Panc1 (cell line): ENCODE measurements at regions of chr3 and their contacts with region 1.

Region 1: GRCh38 chr3:65953301-65953812 is 85.4 kb downstream of the MAGI1 start:
- DNase-seq: no peak
- ATAC-seq: peak; percentile 58; the same call in 1 of the 2 replicates
- H3K4me3 ChIP-seq: no peak overlapping the region
- H3K27ac ChIP-seq: no peak overlapping the region
- H3K4me1 ChIP-seq: peaks cover 15% of the 10 kb centered on the region
- H3K27me3 ChIP-seq: no peaks in the 10 kb centered on the region
- CTCF ChIP-seq: no peak

Region 2: GRCh38 chr3:65742914-65743313 is 210.4 kb before region 1 on chr3:
- CTCF ChIA-PET with region 1: no interaction called
- POLR2A ChIA-PET with region 1: no interaction called
- in situ Hi-C with region 1: no loop called
- intact Hi-C with region 1: no loop called
- DNase-seq: no peak
- ATAC-seq: no peak
- H3K4me3 ChIP-seq: no peak overlapping the region
- H3K27ac ChIP-seq: no peak overlapping the region
- H3K4me1 ChIP-seq: no peaks in the 10 kb centered on the region
- H3K27me3 ChIP-seq: no peaks in the 10 kb centered on the region
- CTCF ChIP-seq: no peak

Region 3: GRCh38 chr3:65914740-65915367 is 38.5 kb before region 1 on chr3:
- CTCF ChIA-PET with region 1: no interaction called
- POLR2A ChIA-PET with region 1: no interaction called
- in situ Hi-C with region 1: no loop called
- intact Hi-C with region 1: no loop called
- DNase-seq: no peak
- ATAC-seq: no peak
- H3K4me3 ChIP-seq: no peak overlapping the region
- H3K27ac ChIP-seq: no peak overlapping the region
- H3K4me1 ChIP-seq: no peaks in the 10 kb centered on the region
- H3K27me3 ChIP-seq: no peaks in the 10 kb centered on the region
- CTCF ChIP-seq: no peak; the same call in 1 of the 2 replicates

Region 4: DNA sequence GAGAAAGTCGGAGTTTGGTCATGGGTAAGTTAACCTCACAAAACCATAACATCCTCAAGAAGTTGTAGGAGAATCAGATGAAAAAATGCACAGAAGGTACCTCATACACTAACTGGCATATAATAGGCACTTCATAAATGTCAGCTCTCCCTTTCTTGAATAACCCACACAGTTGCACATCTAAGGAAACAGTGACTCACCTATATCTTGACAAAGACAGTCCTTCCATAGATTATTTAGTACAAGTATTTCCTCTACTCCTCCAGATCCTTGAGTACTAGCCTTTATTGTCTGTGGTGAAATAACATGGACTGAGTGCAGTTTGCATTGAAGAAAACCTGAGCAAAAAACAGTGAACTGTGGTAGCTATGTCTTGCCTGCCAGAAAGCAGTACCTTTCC is 38.7 kb after region 1 on chr3:
- CTCF ChIA-PET with region 1: no interaction called
- POLR2A ChIA-PET with region 1: no interaction called
- in situ Hi-C with region 1: no loop called
- intact Hi-C with region 1: no loop called
- DNase-seq: no peak
- ATAC-seq: no peak
- H3K4me3 ChIP-seq: no peak overlapping the region
- H3K27ac ChIP-seq: no peak overlapping the region
- H3K4me1 ChIP-seq: no peaks in the 10 kb centered on the region
- H3K27me3 ChIP-seq: no peaks in the 10 kb centered on the region
- CTCF ChIP-seq: no peak

Region 5: GRCh38 chr3:66211779-66212178 is 258.4 kb after region 1 on chr3:
- CTCF ChIA-PET with region 1: no interaction called
- POLR2A ChIA-PET with region 1: interaction called, 10 read pairs
- in situ Hi-C with region 1: no loop called
- intact Hi-C with region 1: no loop called
- DNase-seq: no peak
- ATAC-seq: no peak
- H3K4me3 ChIP-seq: no peak overlapping the region
- H3K27ac ChIP-seq: no peak overlapping the region
- H3K4me1 ChIP-seq: no peaks in the 10 kb centered on the region
- H3K27me3 ChIP-seq: no peaks in the 10 kb centered on the region
- CTCF ChIP-seq: no peak